ENCODE measurements at regions of chr11 and their contacts with region 1.

Region 1: GRCh38 chr11:76318744-76319384 is 62.1 kb downstream of the THAP12 start:
- DNase-seq: peak; percentile 46
- H3K4me3 ChIP-seq: no peak overlapping the region
- H3K27ac ChIP-seq: no peak overlapping the region
- H3K4me1 ChIP-seq: peaks cover 17% of the 10 kb centered on the region
- H3K27me3 ChIP-seq: no peaks in the 10 kb centered on the region
- CTCF ChIP-seq: peak; percentile 84 to 97

Region 2: GRCh38 chr11:75718419-75719339 is 600.2 kb before region 1 on chr11:
- CTCF ChIA-PET with region 1: no interaction called
- dilution Hi-C with region 1: no loop called
- in situ Hi-C with region 1: no loop called
- intact Hi-C with region 1: loop called (anchors 1 kb)
- DNase-seq: no peak
- H3K4me3 ChIP-seq: no peak overlapping the region
- H3K27ac ChIP-seq: no peak overlapping the region
- H3K4me1 ChIP-seq: peaks cover 4% of the 10 kb centered on the region
- H3K27me3 ChIP-seq: no peaks in the 10 kb centered on the region
- CTCF ChIP-seq: no peak

Region 3: GRCh38 chr11:75896843-75897419 is 421.9 kb before region 1 on chr11:
- CTCF ChIA-PET with region 1: interaction called, 9 read pairs
- dilution Hi-C with region 1: no loop called
- in situ Hi-C with region 1: loop called in 1 of 2 experiments (anchors 10 kb)
- intact Hi-C with region 1: loop called (anchors 1 kb)
- DNase-seq: peak; percentile 35
- H3K4me3 ChIP-seq: no peak overlapping the region
- H3K27ac ChIP-seq: no peak overlapping the region
- H3K4me1 ChIP-seq: no peaks in the 10 kb centered on the region
- H3K27me3 ChIP-seq: no peaks in the 10 kb centered on the region
- CTCF ChIP-seq: peak; percentile 59 to 60

Region 4: DNA sequence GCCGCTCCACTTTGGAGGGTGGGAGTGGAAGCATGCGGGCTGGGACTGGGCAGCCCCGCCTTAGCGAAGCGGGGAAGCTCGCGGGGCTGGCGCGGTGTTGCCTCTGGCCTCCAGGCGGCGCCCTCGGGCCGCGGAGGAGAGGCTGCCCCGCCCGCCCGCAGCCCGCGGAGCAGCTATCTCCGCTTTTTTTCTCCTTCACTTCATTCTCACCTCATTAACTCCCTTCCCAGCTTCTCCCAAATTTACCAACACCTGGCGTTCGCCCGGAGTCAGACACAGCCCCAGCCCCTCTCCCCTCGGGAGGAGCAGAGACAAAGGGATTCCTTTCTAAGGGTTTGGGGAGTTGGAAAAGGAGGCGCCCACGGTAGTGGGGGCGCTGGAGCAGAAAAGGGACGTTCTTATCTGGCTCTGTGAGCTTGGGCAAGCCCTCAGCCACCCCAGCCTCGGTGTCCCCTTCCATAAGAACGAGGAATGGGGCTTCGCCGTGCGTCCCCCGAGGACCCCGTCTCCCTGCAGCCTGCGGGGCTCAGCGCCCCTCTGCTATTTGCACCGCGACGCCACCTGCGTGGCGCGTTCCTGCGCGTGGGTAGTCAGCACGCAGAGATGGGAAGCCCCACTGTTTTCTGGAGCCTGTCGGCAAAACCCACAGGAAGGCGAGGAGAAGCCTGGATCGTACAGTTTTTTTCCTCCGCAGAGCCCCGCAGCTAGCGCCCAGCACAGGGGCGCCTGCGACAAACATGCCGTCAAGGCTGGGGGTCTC is 111.0 kb before region 1 on chr11:
- CTCF ChIA-PET with region 1: interaction called, 18 read pairs
- dilution Hi-C with region 1: no loop called
- in situ Hi-C with region 1: loop called (anchors 5 to 10 kb)
- intact Hi-C with region 1: loop called (anchors 1 kb)
- DNase-seq: peak; percentile 68
- H3K4me3 ChIP-seq: peak overlapping the region; percentile 30 to 48 (median 35)
- H3K27ac ChIP-seq: no peak overlapping the region
- H3K4me1 ChIP-seq: peaks cover 40% of the 10 kb centered on the region
- H3K27me3 ChIP-seq: peaks cover 37% of the 10 kb centered on the region
- CTCF ChIP-seq: peak; percentile 83 to 95

Region 5: GRCh38 chr11:76512851-76513653 is 194.2 kb after region 1 on chr11:
- CTCF ChIA-PET with region 1: no interaction called
- dilution Hi-C with region 1: no loop called
- in situ Hi-C with region 1: no loop called
- intact Hi-C with region 1: loop called (anchors 2 kb)
- DNase-seq: peak; percentile 3
- H3K4me3 ChIP-seq: no peak overlapping the region
- H3K27ac ChIP-seq: no peak overlapping the region
- H3K4me1 ChIP-seq: no peaks in the 10 kb centered on the region
- H3K27me3 ChIP-seq: no peaks in the 10 kb centered on the region
- CTCF ChIP-seq: peak; percentile 27 to 44